ENCODE measurements at regions of chr1 and their contacts with region 1.

Region 1: DNA sequence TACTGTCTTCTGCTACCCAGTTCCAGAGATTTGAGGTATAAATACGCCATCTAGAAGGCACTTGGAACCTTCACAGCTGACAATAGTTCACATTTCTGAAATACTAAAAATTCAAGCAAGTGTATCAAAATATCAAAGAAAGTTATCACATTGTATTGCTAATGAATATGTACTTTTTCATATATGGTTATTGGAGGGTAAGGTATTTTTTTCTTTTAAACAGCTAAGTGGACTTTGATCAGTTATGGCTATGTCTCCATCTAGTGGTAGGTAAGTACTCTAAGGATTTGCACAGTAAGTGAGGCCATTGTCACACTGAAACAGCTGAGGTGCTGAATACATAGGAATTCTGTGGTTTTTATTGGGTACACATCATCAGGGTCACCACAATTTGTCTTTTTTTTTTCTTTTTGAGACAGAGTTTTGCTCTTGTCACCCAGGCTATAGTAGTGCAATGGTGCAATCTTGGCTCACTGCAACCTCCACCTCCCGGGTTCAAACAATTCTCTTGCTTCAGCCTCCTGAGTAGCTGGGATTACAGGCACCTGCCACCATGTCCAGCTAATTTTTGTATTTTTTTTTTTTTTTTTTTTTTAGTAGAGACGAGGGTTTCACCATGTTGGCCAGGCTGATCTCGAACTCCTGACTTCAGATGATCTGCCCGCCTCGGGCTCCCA is 49.1 kb upstream of the CR2 start:
- DNase-seq: peak; percentile 93
- ATAC-seq: peak; percentile 97
- H3K4me3 ChIP-seq: no peak overlapping the region
- H3K27ac ChIP-seq: no peak overlapping the region
- H3K4me1 ChIP-seq: no peaks in the 10 kb centered on the region
- H3K27me3 ChIP-seq: peaks cover 25% of the 10 kb centered on the region
- CTCF ChIP-seq: peak; percentile 98

Region 2: GRCh38 chr1:207084701-207085180 is 320.2 kb before region 1 on chr1:
- CTCF ChIA-PET with region 1: interaction called, 20 read pairs
- POLR2A ChIA-PET with region 1: no interaction called
- intact Hi-C with region 1: loop called (anchors 1 kb)
- DNase-seq: peak; percentile 95
- ATAC-seq: peak; percentile 89
- H3K4me3 ChIP-seq: no peak overlapping the region
- H3K27ac ChIP-seq: no peak overlapping the region
- H3K4me1 ChIP-seq: peaks cover 13% of the 10 kb centered on the region
- H3K27me3 ChIP-seq: no peaks in the 10 kb centered on the region
- CTCF ChIP-seq: peak; percentile 94

Region 3: DNA sequence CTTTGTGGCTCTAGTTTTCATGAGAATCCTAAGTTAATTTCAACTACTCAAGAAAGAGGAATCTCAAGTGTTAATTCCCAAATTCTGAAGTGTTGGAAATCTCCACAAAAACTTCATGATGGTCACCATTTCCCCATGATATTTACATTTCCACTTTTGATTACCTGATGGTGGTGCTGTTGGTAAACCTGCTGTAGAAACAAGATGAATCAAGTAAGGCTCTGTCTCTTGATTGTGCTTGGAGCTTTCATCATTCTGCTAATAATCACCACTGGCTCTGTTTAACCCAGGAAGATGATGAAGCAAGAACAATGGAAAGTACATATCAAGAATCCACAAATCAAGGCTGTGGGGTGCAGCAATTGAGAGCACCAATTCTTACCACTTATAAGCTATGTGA is 223.1 kb before region 1 on chr1:
- CTCF ChIA-PET with region 1: interaction called, 8 read pairs
- POLR2A ChIA-PET with region 1: no interaction called
- intact Hi-C with region 1: loop called (anchors 1 kb)
- DNase-seq: peak; percentile 61
- ATAC-seq: peak; percentile 51
- H3K4me3 ChIP-seq: no peak overlapping the region
- H3K27ac ChIP-seq: no peak overlapping the region
- H3K4me1 ChIP-seq: no peaks in the 10 kb centered on the region
- H3K27me3 ChIP-seq: peaks cover 3% of the 10 kb centered on the region; the same call in 1 of the 2 replicates
- CTCF ChIP-seq: peak; percentile 82

Region 4: DNA sequence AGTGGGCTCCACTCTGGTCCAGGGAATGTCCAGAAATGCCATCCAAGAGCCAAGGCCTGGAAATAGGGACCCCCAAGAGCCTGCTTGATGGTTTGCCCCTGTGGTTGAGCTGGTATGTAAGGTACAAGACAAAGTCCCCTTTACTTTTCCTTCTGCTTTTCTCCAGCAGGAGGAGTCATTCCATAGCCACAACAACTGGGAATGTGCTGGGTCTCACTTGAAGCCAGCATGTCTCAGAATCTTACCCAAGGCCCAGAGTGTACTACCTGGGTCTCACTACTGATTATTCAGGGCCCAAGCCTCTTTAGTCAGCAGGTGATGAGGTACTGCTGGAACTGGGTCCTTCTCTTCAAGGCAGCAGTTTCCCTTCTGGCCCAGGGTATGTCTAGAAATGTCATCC is 145.6 kb before region 1 on chr1:
- CTCF ChIA-PET with region 1: interaction called, 20 read pairs
- POLR2A ChIA-PET with region 1: no interaction called
- intact Hi-C with region 1: loop called (anchors 1 kb)
- DNase-seq: peak; percentile 86
- ATAC-seq: peak; percentile 84
- H3K4me3 ChIP-seq: no peak overlapping the region
- H3K27ac ChIP-seq: no peak overlapping the region
- H3K4me1 ChIP-seq: peaks cover 5% of the 10 kb centered on the region; the same call in 1 of the 2 replicates
- H3K27me3 ChIP-seq: no peaks in the 10 kb centered on the region
- CTCF ChIP-seq: peak; percentile 90

Region 5: DNA sequence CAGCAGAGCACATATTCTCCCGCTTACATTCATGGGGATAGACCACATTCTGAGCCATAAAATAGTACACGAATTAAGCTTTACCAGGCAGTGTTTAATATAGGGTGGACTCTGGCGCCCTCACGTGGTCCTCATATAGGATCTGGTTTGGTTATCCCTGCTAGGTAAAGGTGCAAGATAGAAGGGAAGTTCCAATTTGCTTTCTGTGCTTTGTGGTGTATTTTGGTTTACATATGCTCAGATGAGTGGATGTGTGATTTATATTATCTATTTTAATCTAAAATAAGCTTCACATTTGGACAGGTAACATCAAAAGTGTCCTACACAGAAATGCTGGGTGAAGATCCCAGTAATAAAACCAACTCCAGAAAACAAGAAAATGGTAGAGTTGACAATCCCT is 94.6 kb after region 1 on chr1:
- CTCF ChIA-PET with region 1: interaction called, 3 read pairs
- POLR2A ChIA-PET with region 1: no interaction called
- intact Hi-C with region 1: loop called (anchors 1 kb)
- DNase-seq: peak; percentile 90
- ATAC-seq: peak; percentile 99
- H3K4me3 ChIP-seq: no peak overlapping the region
- H3K27ac ChIP-seq: no peak overlapping the region
- H3K4me1 ChIP-seq: no peaks in the 10 kb centered on the region
- H3K27me3 ChIP-seq: peaks cover 80% of the 10 kb centered on the region
- CTCF ChIP-seq: peak; percentile 99

Region 6: DNA sequence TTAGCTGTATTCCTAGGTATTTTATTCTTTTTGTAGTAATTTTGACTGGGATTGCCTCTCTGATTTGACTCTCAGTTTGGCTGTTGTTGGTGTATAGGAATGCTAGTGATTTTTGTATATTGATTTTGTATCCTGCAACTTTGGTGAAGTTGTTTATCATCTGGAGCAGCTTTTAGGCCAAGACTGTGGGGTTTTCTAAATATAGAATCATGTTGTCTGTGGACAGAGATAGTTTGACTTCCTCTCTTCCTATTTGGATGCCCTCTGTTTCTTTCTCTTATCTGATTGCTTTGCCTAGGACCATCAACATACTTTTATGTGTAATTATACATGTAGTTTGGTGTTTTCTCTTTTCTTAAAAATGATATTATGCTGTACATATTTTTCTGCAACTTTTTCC is 374.0 kb after region 1 on chr1:
- CTCF ChIA-PET with region 1: no interaction called
- POLR2A ChIA-PET with region 1: no interaction called
- intact Hi-C with region 1: no loop called
- DNase-seq: no peak
- ATAC-seq: no peak
- H3K4me3 ChIP-seq: no peak overlapping the region
- H3K27ac ChIP-seq: no peak overlapping the region
- H3K4me1 ChIP-seq: no peaks in the 10 kb centered on the region
- H3K27me3 ChIP-seq: no peaks in the 10 kb centered on the region
- CTCF ChIP-seq: no peak

Measured in PC-3 (cell line).